ENCODE measurements at regions of chr1 and their contacts with region 1.

Region 1: GRCh38 chr1:202892511-202892910 is 3.6 kb upstream of the RABIF start:
- DNase-seq: no peak
- ATAC-seq: no peak
- H3K4me3 ChIP-seq: no peak overlapping the region
- H3K4me3 Mint-ChIP-seq: no peak overlapping the region
- H3K27ac ChIP-seq: no peak overlapping the region
- H3K27ac Mint-ChIP-seq: no peak overlapping the region
- H3K4me1 ChIP-seq: peaks cover 8 to 12% of the 10 kb centered on the region in 2 experiments
- H3K4me1 Mint-ChIP-seq: peaks cover 9 to 19% (median 14%) of the 10 kb centered on the region in 3 donors
- H3K27me3 ChIP-seq: no peaks in the 10 kb centered on the region
- H3K27me3 Mint-ChIP-seq: no peaks in the 10 kb centered on the region

Region 2: GRCh38 chr1:201154389-201155165 is 1737.9 kb before region 1 on chr1 and contains the start of gene TMEM9:
- CTCF ChIA-PET with region 1: no interaction called
- POLR2A ChIA-PET with region 1: interaction called in 1 of 2 experiments, 12 read pairs
- DNase-seq: peak; percentile 90 to 99 (median 97)
- ATAC-seq: peak; percentile 96 to 98 (median 96)
- H3K4me3 ChIP-seq: peak within 1 kb of the TSS; percentile 62 to 76
- H3K4me3 Mint-ChIP-seq: peak within 1 kb of the TSS; percentile 86 to 93 (median 86)
- H3K27ac ChIP-seq: peak within 1 kb of the TSS; percentile 10
- H3K27ac Mint-ChIP-seq: peak within 1 kb of the TSS; percentile 88 to 95
- H3K4me1 ChIP-seq: peaks cover 3 to 19% of the 10 kb centered on the region in 2 experiments
- H3K4me1 Mint-ChIP-seq: peaks cover 23 to 27% (median 25%) of the 10 kb centered on the region in 3 donors
- H3K27me3 ChIP-seq: peaks cover 0 to 12% of the 10 kb centered on the region in 2 experiments
- H3K27me3 Mint-ChIP-seq: peaks cover 8 to 23% of the 10 kb centered on the region in 2 donors
- total RNA-seq, gene TMEM9: 15.5 to 22.2 (median 17.7) TPM